Activated CD4-positive, alpha-beta T cell treated with anti-CD3 and anti-CD28 coated beads for 36 hours (primary cell): ENCODE measurements at regions of chr2 and their contacts with region 1.

Region 1: DNA sequence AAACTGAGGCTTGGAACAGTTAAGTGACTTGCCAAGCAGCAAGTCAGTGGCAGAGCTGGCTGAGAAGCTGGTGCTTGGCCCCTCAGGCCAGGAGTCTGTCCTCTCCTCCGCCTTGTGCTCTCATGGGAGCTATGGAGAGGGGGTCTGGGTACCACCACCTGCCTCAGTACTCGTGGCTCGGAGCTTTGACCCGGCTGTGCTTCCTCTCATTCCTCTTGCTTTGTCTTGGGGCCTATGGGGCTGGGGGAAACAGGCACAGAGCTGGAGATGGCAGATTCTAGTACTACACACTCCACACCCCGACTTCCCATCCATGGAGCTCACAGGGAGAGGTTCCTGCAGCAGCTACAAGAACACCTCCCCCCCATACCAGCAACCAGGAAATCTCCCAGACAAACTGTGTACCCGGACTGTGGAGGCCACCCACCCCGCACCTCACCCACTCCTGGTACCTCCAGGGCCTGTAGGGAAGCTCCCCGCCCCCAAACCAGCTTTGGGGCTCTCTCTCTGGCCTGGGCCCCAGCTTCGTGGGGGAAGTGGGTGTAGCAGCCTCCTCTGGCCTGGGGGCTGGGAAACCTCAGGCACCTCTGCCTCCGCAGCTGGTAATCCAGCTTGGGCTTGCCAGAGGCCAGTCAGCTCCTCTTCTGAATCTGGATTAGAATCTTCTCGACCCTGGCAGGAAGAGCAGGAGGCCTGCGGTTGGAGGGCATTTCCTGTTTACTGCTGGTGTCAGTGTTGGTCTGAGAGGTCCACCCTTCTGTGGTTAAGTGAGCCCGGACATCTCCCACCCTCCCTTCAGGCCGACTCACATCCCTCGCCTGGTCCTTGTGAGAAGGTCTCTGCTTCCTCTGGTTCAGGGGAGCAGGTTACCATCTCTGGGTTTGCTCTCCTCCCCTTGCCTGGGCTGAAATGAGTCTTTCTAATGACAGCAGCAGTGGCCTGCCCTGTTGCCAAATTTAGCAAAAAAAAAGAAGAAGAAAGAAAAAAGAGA is 22.3 kb upstream of the RHOB start:
- DNase-seq: peak; percentile 36
- ATAC-seq: peak; percentile 38
- H3K4me3 Mint-ChIP-seq: no peak overlapping the region
- H3K27ac Mint-ChIP-seq: peak overlapping the region; percentile 34
- H3K4me1 Mint-ChIP-seq: peaks cover 16% of the 10 kb centered on the region
- H3K27me3 Mint-ChIP-seq: peaks cover 3% of the 10 kb centered on the region

Region 2: DNA sequence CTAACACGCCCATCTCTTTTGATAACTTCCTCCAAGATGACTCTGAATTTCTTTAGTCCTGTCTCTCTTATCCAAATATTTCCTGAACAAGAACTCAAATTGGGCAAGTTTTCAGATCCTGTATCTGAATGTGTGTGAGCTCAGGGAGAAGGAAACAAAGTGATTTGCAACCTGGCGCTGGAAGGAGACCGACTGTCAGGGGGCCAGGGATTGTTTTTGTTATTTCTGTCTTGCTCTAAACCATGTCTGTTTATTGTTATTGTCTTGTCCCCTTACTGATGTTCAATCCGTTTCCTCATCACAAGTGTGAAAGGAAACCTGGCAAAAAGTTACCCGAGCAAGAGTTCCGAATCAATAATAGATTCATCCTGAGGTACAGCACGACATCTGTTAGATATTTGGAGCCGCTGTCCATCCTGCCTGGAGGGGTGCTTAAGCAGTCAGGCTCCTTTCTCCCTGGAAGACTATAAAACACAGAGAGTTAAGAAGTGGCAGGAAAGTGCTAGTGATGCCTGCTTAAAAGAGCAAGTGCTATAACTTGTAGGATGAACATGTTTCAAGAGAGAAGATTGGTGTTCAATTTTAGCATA is 933.7 kb before region 1 on chr2:
- CTCF ChIA-PET with region 1: no interaction called
- POLR2A ChIA-PET with region 1: no interaction called
- intact Hi-C with region 1: loop called in 1 of 2 experiments (anchors 10 kb)
- DNase-seq: no peak
- ATAC-seq: no peak
- H3K4me3 Mint-ChIP-seq: no peak overlapping the region
- H3K27ac Mint-ChIP-seq: no peak overlapping the region
- H3K4me1 Mint-ChIP-seq: peaks cover 6% of the 10 kb centered on the region
- H3K27me3 Mint-ChIP-seq: peaks cover 34% of the 10 kb centered on the region

Region 3: DNA sequence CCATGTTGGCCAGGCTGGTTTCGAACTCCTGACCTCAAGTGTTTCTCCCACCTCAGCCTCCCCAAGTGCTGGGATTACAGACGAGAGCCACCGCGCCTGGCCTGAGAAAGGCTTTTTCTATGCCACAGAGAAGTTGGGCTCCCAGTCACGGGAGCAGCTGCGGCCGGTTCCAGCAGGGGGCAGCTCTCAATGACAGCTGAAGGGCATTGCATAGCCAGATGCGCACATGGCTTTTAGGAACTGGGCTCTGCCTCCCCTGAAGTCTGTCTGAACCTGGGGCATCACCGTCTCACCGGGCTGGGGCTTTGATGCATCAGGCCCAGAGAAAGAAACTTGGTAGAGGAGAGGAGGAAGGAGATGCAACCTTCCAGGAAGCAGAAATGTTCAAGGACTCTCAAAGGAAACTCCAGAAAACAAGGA is 289.0 kb before region 1 on chr2:
- CTCF ChIA-PET with region 1: no interaction called
- POLR2A ChIA-PET with region 1: no interaction called
- intact Hi-C with region 1: loop called in 1 of 2 experiments (anchors 10 kb)
- DNase-seq: peak; percentile 72
- ATAC-seq: peak; percentile 71
- H3K4me3 Mint-ChIP-seq: no peak overlapping the region
- H3K27ac Mint-ChIP-seq: no peak overlapping the region
- H3K4me1 Mint-ChIP-seq: no peaks in the 10 kb centered on the region
- H3K27me3 Mint-ChIP-seq: peaks cover 8% of the 10 kb centered on the region

Region 4: GRCh38 chr2:20242060-20243006 is 182.3 kb before region 1 on chr2:
- CTCF ChIA-PET with region 1: interaction called, 3 read pairs
- POLR2A ChIA-PET with region 1: no interaction called
- intact Hi-C with region 1: loop called (anchors 5 to 10 kb)
- DNase-seq: peak; percentile 69
- ATAC-seq: peak; percentile 76
- H3K4me3 Mint-ChIP-seq: peak overlapping the region; percentile 38
- H3K27ac Mint-ChIP-seq: no peak overlapping the region
- H3K4me1 Mint-ChIP-seq: peaks cover 4% of the 10 kb centered on the region
- H3K27me3 Mint-ChIP-seq: peaks cover 2% of the 10 kb centered on the region

Region 5: DNA sequence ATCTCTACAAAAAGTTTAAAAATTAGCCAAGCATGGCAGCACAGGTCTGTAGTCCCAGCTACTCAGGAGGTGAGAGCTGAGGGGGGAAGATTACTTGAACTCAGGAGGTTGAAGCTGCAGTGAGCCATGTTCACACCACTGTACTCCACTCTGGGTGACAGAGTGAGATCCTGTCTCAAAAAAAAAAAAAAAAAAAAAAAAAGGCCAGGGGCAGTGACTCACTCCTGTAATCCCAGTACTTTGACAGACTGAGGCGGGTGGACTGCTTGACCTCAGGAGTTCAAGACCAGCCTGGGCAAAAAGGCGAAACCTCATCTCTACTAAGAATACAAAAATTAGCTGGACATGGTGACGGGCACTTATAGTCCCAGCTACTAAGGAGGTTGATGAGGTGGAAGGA is 110.9 kb before region 1 on chr2:
- CTCF ChIA-PET with region 1: no interaction called
- POLR2A ChIA-PET with region 1: interaction called, 11 read pairs
- intact Hi-C with region 1: no loop called
- DNase-seq: no peak
- ATAC-seq: peak; percentile 44
- H3K4me3 Mint-ChIP-seq: no peak overlapping the region
- H3K27ac Mint-ChIP-seq: no peak overlapping the region
- H3K4me1 Mint-ChIP-seq: peaks cover 26% of the 10 kb centered on the region
- H3K27me3 Mint-ChIP-seq: no peaks in the 10 kb centered on the region